Heart right ventricle (tissue), 16 donors: ENCODE measurements at regions of chr20 and their contacts with region 1.

Region 1: DNA sequence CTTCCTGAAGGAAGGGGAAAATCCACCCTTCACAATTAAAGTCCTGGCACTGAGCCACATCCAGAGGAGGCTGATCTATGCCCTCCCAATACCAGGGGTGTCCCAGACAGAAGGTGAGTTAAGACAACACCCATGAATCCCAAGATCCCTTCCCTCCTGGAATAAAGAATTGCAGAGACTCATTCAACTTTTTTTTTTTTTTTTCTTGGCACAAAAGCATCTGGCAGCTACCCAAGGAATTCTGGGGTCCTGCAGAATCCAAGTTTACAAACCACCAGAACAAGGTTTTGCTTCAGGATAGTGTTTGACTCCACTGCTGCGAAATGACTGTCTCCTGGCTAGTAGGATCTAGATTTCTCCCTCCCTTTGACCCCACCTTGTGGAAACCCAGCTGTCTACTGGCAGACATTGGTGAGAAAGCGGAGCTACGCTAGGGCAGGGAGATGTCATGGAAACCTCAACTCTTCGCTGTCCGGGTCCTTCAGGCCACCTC is 37.4 kb downstream of the JAG1 start:
- DNase-seq: peak in 1 of 2 donors; percentile 34
- ATAC-seq: peak; percentile 39 to 52 (median 46)
- H3K4me3 ChIP-seq: no peak overlapping the region
- H3K27ac ChIP-seq: peak overlapping the region in 9 of 10 donors; percentile 13 to 78 (median 67)
- H3K4me1 ChIP-seq: peaks cover 13 to 90% (median 63%) of the 10 kb centered on the region in 9 donors
- H3K27me3 ChIP-seq: no peaks in the 10 kb centered on the region
- CTCF ChIP-seq: peak in 1 of 9 donors; percentile 20

Region 2: GRCh38 chr20:10553326-10553984 is 82.9 kb before region 1 on chr20:
- intact Hi-C with region 1: no loop called
- DNase-seq: peak; percentile 55 to 77
- ATAC-seq: peak in 7 of 8 donors; percentile 45 to 79 (median 73)
- H3K4me3 ChIP-seq: no peak overlapping the region
- H3K27ac ChIP-seq: no peak overlapping the region
- H3K4me1 ChIP-seq: peaks cover 0 to 38% (median 14%) of the 10 kb centered on the region in 9 donors
- H3K27me3 ChIP-seq: no peaks in the 10 kb centered on the region
- CTCF ChIP-seq: peak; percentile 65 to 90 (median 82)

Region 3: DNA sequence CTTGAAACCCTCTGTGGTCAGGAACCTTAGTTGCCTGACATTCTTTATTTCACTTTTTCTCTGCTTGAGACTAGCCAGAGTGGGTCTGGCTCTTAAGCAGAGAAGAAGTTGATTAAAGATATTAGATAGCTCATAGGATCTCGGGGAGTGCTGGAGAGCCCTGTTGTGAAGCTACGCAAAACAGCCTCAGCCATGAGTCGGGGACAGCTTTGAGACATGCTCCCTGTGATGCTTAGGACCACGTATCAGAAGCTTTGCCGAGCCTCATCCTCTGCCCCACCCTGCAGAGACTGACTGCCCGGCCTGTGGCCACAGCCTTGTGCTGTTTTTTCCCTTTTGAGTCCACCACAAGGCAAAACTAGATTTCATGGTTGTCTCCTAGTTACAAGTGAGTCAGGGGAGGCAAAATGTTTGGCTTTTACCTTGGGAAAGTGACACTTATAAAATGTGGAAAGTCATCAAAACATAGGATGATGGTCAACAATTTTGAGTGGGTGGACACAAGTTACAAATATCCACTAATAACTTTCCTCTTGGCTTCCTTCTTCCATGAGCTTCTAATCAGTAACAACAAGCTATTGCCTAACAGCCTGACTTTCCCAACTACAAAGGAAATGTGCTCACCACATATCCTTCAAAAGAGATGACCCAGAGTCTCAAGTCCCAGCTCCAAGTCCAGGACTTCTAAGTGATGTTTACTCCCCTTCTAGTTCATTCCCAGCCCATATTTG is 71.0 kb before region 1 on chr20:
- intact Hi-C with region 1: loop called in 1 of 10 experiments (anchors 10 kb)
- DNase-seq: no peak
- ATAC-seq: peak in 7 of 8 donors; percentile 48 to 91 (median 67)
- H3K4me3 ChIP-seq: no peak overlapping the region
- H3K27ac ChIP-seq: peak overlapping the region in 7 of 10 donors; percentile 16 to 66 (median 48)
- H3K4me1 ChIP-seq: peaks cover 0 to 15% (median 3%) of the 10 kb centered on the region in 9 donors
- H3K27me3 ChIP-seq: no peaks in the 10 kb centered on the region
- CTCF ChIP-seq: no peak